ENCODE measurements at regions of chr15 and their contacts with region 1.

Region 1: GRCh38 chr15:68875377-68876116 is 54.8 kb upstream of the SPESP1 start:
- DNase-seq: peak; percentile 88
- ATAC-seq: peak; percentile 89
- H3K4me3 ChIP-seq: peak overlapping the region; percentile 26 to 48
- H3K27ac ChIP-seq: no peak overlapping the region
- H3K4me1 ChIP-seq: peaks cover 0 to 9% of the 10 kb centered on the region in 2 experiments; a peak in 1 of 4 replicates
- H3K27me3 ChIP-seq: no peaks in the 10 kb centered on the region
- CTCF ChIP-seq: peak; percentile 83 to 88 (median 87)
- POLR2A ChIP-seq: no peak
- RAD21 ChIP-seq: peak; percentile 95

Region 2: GRCh38 chr15:68559345-68560310 is 315.9 kb before region 1 on chr15:
- CTCF ChIA-PET with region 1: interaction called, 45 read pairs
- POLR2A ChIA-PET with region 1: no interaction called
- RAD21 ChIA-PET with region 1: interaction called, 3 to 7 read pairs
- intact Hi-C with region 1: loop called (anchors 1 kb)
- DNase-seq: peak; percentile 56
- ATAC-seq: peak; percentile 97
- H3K4me3 ChIP-seq: peak overlapping the region; percentile 44 to 56
- H3K27ac ChIP-seq: no peak overlapping the region
- H3K4me1 ChIP-seq: peaks cover 0 to 15% of the 10 kb centered on the region in 2 experiments; a peak in 2 of 4 replicates
- H3K27me3 ChIP-seq: no peaks in the 10 kb centered on the region
- CTCF ChIP-seq: peak; percentile 85 to 92 (median 92)
- POLR2A ChIP-seq: no peak
- RAD21 ChIP-seq: peak; percentile 91

Region 3: GRCh38 chr15:68730471-68730919 is 145.1 kb before region 1 on chr15:
- CTCF ChIA-PET with region 1: interaction called, 41 read pairs
- POLR2A ChIA-PET with region 1: no interaction called
- RAD21 ChIA-PET with region 1: interaction called, 4 to 5 read pairs
- intact Hi-C with region 1: loop called (anchors 1 kb)
- DNase-seq: peak; percentile 52
- ATAC-seq: peak; percentile 89
- H3K4me3 ChIP-seq: no peak overlapping the region
- H3K27ac ChIP-seq: no peak overlapping the region
- H3K4me1 ChIP-seq: no peaks in the 10 kb centered on the region; a peak in 1 of 4 replicates
- H3K27me3 ChIP-seq: no peaks in the 10 kb centered on the region
- CTCF ChIP-seq: peak; percentile 55 to 69 (median 57); a peak in 5 of 6 replicates
- POLR2A ChIP-seq: no peak
- RAD21 ChIP-seq: peak; percentile 78

Region 4: DNA sequence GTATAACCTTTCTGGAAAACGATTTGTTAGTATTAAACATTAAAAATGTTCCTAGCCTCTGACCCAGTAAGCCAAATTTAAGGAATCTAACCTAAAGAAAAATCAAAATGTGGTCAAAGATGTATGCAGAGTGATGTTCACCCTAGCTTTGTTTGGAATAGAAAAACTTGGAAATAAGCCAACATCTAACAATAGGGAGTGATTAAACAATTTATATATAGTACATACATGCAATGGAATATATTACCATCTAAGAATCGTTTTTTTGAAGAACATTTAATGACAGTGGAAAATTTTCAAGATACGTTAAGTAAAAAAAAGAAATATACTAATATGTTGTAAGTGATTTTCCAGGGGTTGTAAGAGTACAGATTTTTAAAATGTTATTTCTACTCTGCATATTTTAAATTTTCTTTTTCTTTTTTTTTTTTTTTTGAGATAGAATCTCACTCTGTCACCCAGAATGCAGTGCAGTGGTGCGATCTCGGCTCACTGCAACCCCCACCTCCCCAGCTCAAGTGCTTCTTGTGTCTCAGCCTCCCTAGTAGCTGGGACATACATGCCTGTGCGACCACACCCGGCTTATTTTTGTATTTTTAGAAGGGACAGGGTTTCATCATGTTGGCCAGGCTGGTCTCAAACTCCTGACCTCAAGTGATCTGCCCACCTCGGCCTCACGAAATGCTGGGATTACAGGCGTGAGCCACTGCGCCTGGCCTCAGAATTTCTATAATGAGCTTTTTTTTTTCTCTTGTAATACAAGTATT is 109.8 kb before region 1 on chr15:
- CTCF ChIA-PET with region 1: interaction called, 16 read pairs
- POLR2A ChIA-PET with region 1: no interaction called
- RAD21 ChIA-PET with region 1: no interaction called
- intact Hi-C with region 1: no loop called
- DNase-seq: no peak
- ATAC-seq: no peak
- H3K4me3 ChIP-seq: no peak overlapping the region
- H3K27ac ChIP-seq: no peak overlapping the region
- H3K4me1 ChIP-seq: peaks cover 0 to 3% of the 10 kb centered on the region in 2 experiments; a peak in 1 of 4 replicates
- H3K27me3 ChIP-seq: no peaks in the 10 kb centered on the region
- CTCF ChIP-seq: no peak
- POLR2A ChIP-seq: no peak
- RAD21 ChIP-seq: no peak

Region 5: GRCh38 chr15:68783226-68784058 is 92.1 kb before region 1 on chr15:
- CTCF ChIA-PET with region 1: interaction called, 41 read pairs
- POLR2A ChIA-PET with region 1: interaction called, 4 read pairs
- RAD21 ChIA-PET with region 1: interaction called, 3 to 4 read pairs
- intact Hi-C with region 1: loop called (anchors 1 kb)
- DNase-seq: peak; percentile 8
- ATAC-seq: peak; percentile 96
- H3K4me3 ChIP-seq: no peak overlapping the region
- H3K27ac ChIP-seq: no peak overlapping the region
- H3K4me1 ChIP-seq: no peaks in the 10 kb centered on the region
- H3K27me3 ChIP-seq: no peaks in the 10 kb centered on the region
- CTCF ChIP-seq: peak; percentile 42 to 80 (median 71); a peak in 5 of 6 replicates
- POLR2A ChIP-seq: no peak
- RAD21 ChIP-seq: peak; percentile 59

Region 6: DNA sequence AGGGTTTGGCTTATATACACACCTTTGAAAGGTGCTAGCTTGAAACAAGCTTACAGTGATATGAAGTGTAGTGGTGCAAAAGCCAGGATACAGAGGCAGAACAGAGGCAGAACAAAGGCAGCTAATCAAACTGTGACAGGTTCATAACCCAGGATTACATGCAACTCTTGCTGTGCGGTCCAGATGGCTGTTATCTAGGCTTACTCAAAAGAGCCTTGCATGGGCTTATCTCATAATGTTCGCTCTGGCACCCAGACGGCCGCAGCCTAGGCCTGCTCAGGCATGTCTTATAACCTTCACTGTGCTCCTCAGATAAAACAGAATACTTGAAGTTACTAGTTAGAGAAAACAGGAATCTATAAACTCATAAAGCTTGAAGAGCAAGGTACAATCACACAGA is 116.2 kb after region 1 on chr15:
- CTCF ChIA-PET with region 1: no interaction called
- POLR2A ChIA-PET with region 1: no interaction called
- RAD21 ChIA-PET with region 1: no interaction called
- intact Hi-C with region 1: no loop called
- DNase-seq: no peak
- ATAC-seq: no peak
- H3K4me3 ChIP-seq: no peak overlapping the region
- H3K27ac ChIP-seq: no peak overlapping the region
- H3K4me1 ChIP-seq: 0 out of 4 replicates have a peak, but pooled peaks cover 0 to 4% of the 10 kb centered on the region in 2 experiments
- H3K27me3 ChIP-seq: no peaks in the 10 kb centered on the region
- CTCF ChIP-seq: no peak
- POLR2A ChIP-seq: no peak
- RAD21 ChIP-seq: no peak

Measured in HCT116 (cell line).